Heart right ventricle (tissue), 16 donors: ENCODE measurements at regions of chr13 and their contacts with region 1.

Region 1: GRCh38 chr13:80227645-80228044 is 113.3 kb downstream of the SPRY2 start:
- DNase-seq: no peak
- ATAC-seq: no peak
- H3K4me3 ChIP-seq: no peak overlapping the region
- H3K27ac ChIP-seq: no peak overlapping the region
- H3K4me1 ChIP-seq: no peaks in the 10 kb centered on the region
- H3K27me3 ChIP-seq: no peaks in the 10 kb centered on the region
- CTCF ChIP-seq: no peak

Region 2: DNA sequence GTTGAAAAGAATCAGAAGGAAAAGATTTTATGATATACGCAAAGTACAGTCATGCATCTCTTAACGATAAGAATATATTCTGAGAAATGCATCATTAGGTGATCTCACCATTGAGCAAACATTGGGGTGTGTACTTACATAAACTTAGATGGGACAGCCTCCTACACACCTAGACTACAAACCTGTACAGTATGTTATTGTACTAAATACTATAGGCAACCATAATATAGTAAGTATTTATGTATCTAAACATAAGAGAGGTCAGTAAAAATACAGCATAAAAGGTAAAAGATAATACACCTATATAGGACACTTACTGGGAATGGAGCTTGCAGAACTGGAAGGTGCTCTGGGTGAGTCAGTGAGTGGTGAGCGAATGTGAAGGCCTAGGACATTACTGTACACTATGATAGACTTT is 141.3 kb before region 1 on chr13:
- intact Hi-C with region 1: no loop called
- DNase-seq: no peak
- ATAC-seq: no peak
- H3K4me3 ChIP-seq: no peak overlapping the region
- H3K27ac ChIP-seq: no peak overlapping the region
- H3K4me1 ChIP-seq: peaks cover 0 to 22% (median 19%) of the 10 kb centered on the region in 9 donors
- H3K27me3 ChIP-seq: no peaks in the 10 kb centered on the region
- CTCF ChIP-seq: no peak

Region 3: DNA sequence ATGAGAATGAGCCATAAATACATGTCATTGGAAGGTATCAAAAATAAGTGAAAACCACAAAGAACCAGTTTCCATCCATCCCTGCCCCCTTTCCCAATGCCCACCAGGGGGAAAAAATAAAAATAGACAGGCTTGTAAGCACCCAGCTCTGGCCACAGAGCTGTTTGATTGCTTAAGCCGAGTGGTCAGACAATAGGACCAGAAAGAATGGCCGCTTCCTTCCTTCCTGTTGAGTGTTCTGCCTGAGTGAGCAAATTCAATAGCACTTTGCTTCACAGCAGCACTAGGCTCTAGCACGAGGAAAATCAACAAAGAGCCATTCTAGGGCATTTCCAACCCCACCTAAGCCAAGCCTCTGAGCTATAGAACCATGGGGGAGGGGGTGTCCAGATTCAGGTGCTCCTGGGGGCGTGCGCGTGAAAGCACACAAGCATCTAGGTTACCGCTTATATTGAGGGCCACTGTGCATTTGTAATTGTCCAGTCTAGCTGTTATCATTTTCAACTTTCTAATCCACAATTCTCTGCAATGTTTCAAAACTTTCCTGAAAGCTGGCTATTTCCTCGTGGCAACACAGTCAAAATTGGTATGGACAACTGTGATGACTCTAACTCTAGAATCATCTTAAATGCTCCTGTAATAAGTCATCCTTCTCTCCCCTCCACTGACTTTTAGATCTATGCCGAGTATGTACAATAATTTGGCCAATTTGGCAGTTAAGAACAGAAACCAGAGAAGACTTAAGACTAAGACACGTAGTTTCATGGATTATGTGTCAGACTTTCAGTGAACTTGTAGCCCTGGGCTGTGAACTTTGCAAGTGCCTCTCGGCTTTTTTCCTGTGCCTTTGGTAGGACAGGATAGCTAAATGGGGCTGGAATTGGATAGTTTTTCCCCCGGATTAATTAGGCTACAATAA is 49.0 kb after region 1 on chr13:
- intact Hi-C with region 1: loop called in 1 of 10 experiments (anchors 2 kb)
- DNase-seq: peak in 1 of 2 donors; percentile 38
- ATAC-seq: peak; percentile 69 to 95 (median 88)
- H3K4me3 ChIP-seq: no peak overlapping the region
- H3K27ac ChIP-seq: peak overlapping the region in 6 of 10 donors; percentile 1 to 73 (median 48)
- H3K4me1 ChIP-seq: peaks cover 0 to 32% (median 18%) of the 10 kb centered on the region in 9 donors
- H3K27me3 ChIP-seq: no peaks in the 10 kb centered on the region
- CTCF ChIP-seq: peak in 1 of 9 donors; percentile 20